Activated CD4-positive, alpha-beta T cell treated with anti-CD3 and anti-CD28 coated beads for 36 hours (primary cell): ENCODE measurements at regions of chr4 and their contacts with region 1.

Region 1: GRCh38 chr4:108030332-108030731 is 40.6 kb downstream of the HADH start:
- DNase-seq: peak; percentile 87
- ATAC-seq: peak; percentile 85
- H3K4me3 Mint-ChIP-seq: peak overlapping the region; percentile 38
- H3K27ac Mint-ChIP-seq: peak overlapping the region; percentile 97
- H3K4me1 Mint-ChIP-seq: peaks cover 65% of the 10 kb centered on the region
- H3K27me3 Mint-ChIP-seq: no peaks in the 10 kb centered on the region

Region 2: GRCh38 chr4:108054025-108054638 is 23.8 kb after region 1 on chr4:
- CTCF ChIA-PET with region 1: interaction called, 10 read pairs
- POLR2A ChIA-PET with region 1: interaction called, 3 read pairs
- intact Hi-C with region 1: loop called in 1 of 2 experiments (anchors 1 kb)
- DNase-seq: peak; percentile 42
- ATAC-seq: no peak
- H3K4me3 Mint-ChIP-seq: no peak overlapping the region
- H3K27ac Mint-ChIP-seq: peak overlapping the region; percentile 72
- H3K4me1 Mint-ChIP-seq: peaks cover 95% of the 10 kb centered on the region
- H3K27me3 Mint-ChIP-seq: no peaks in the 10 kb centered on the region

Region 3: GRCh38 chr4:108141213-108141950 is 111.0 kb after region 1 on chr4:
- CTCF ChIA-PET with region 1: interaction called, 5 read pairs
- POLR2A ChIA-PET with region 1: interaction called, 3 read pairs
- intact Hi-C with region 1: loop called in 1 of 2 experiments (anchors 2 kb)
- DNase-seq: peak; percentile 70
- ATAC-seq: peak; percentile 53
- H3K4me3 Mint-ChIP-seq: peak overlapping the region; percentile 75
- H3K27ac Mint-ChIP-seq: peak overlapping the region; percentile 100
- H3K4me1 Mint-ChIP-seq: peaks cover 89% of the 10 kb centered on the region
- H3K27me3 Mint-ChIP-seq: no peaks in the 10 kb centered on the region

Region 4: GRCh38 chr4:108172753-108173598 is 142.6 kb after region 1 on chr4:
- CTCF ChIA-PET with region 1: interaction called, 21 read pairs
- POLR2A ChIA-PET with region 1: interaction called, 4 read pairs
- intact Hi-C with region 1: loop called (anchors 1 to 2 kb)
- DNase-seq: peak; percentile 84
- ATAC-seq: peak; percentile 42
- H3K4me3 Mint-ChIP-seq: peak overlapping the region; percentile 85
- H3K27ac Mint-ChIP-seq: peak overlapping the region; percentile 95
- H3K4me1 Mint-ChIP-seq: peaks cover 53% of the 10 kb centered on the region
- H3K27me3 Mint-ChIP-seq: peaks cover 12% of the 10 kb centered on the region

Region 5: GRCh38 chr4:108492816-108493595 is 462.7 kb after region 1 on chr4:
- CTCF ChIA-PET with region 1: interaction called, 5 read pairs
- POLR2A ChIA-PET with region 1: no interaction called
- intact Hi-C with region 1: loop called (anchors 2 to 5 kb)
- DNase-seq: peak; percentile 57
- ATAC-seq: peak; percentile 77
- H3K4me3 Mint-ChIP-seq: no peak overlapping the region
- H3K27ac Mint-ChIP-seq: no peak overlapping the region
- H3K4me1 Mint-ChIP-seq: no peaks in the 10 kb centered on the region
- H3K27me3 Mint-ChIP-seq: no peaks in the 10 kb centered on the region

Region 6: GRCh38 chr4:108620101-108620932 is 590.0 kb after region 1 on chr4 and contains the start of gene RPL34:
- CTCF ChIA-PET with region 1: interaction called, 6 read pairs
- POLR2A ChIA-PET with region 1: interaction called, 3 read pairs
- intact Hi-C with region 1: loop called (anchors 2 to 5 kb)
- DNase-seq: peak; percentile 98
- ATAC-seq: peak; percentile 91
- H3K4me3 Mint-ChIP-seq: peak within 1 kb of the TSS; percentile 90
- H3K27ac Mint-ChIP-seq: peak within 1 kb of the TSS; percentile 98
- H3K4me1 Mint-ChIP-seq: peaks cover 47% of the 10 kb centered on the region
- H3K27me3 Mint-ChIP-seq: no peaks in the 10 kb centered on the region
- total RNA-seq, gene RPL34: 1,121 to 1,847 TPM